HepG2 (cell line): ENCODE measurements at regions of chr12 and their contacts with region 1.

Region 1: GRCh38 chr12:88993651-88994050 is 358.6 kb downstream of the DUSP6 start:
- DNase-seq: peak; percentile 36
- ATAC-seq: no peak
- H3K4me3 ChIP-seq: no peak overlapping the region
- H3K27ac ChIP-seq: no peak overlapping the region
- H3K4me1 ChIP-seq: no peaks in the 10 kb centered on the region
- H3K27me3 ChIP-seq: no peaks in the 10 kb centered on the region; a peak in 1 of 5 replicates
- CTCF ChIP-seq: peak; percentile 55
- EP300 ChIP-seq: no peak
- POLR2A ChIP-seq: no peak
- RAD21 ChIP-seq: no peak

Region 2: DNA sequence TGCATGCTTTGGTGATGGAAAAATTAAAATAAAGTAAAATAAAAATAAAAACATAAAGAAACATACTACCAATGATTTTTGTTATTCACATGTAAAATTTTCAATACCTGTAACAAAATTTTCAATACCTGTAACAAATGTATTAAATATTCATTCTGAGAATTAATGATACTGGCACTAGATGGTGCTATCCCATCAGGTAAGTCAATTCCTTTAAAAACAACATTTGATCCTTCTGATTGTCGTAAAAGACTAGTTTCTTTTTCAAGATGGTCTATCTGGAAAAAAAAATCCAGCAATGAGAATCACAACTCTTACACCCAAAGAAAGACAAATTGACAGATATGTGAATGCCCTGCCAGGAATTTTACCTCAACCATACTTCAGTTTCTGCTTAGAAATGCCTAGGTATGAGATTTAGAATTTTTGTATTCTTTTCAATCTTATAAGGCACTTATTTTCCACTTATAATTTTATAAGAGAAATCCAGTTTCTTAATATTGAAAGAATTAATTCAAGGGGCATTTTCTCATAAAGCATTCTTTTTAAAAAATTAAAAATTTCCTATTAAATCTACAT is 882.5 kb before region 1 on chr12:
- CTCF ChIA-PET with region 1: no interaction called
- POLR2A ChIA-PET with region 1: no interaction called
- in situ Hi-C with region 1: no loop called
- intact Hi-C with region 1: loop called (anchors 5 kb)
- DNase-seq: peak; percentile 24
- ATAC-seq: no peak
- H3K4me3 ChIP-seq: no peak overlapping the region
- H3K27ac ChIP-seq: no peak overlapping the region
- H3K4me1 ChIP-seq: peaks cover 7% of the 10 kb centered on the region
- H3K27me3 ChIP-seq: no peaks in the 10 kb centered on the region
- CTCF ChIP-seq: peak; percentile 46
- EP300 ChIP-seq: no peak
- POLR2A ChIP-seq: no peak
- RAD21 ChIP-seq: no peak

Region 3: GRCh38 chr12:88153959-88154358 is 839.7 kb before region 1 on chr12:
- CTCF ChIA-PET with region 1: no interaction called
- POLR2A ChIA-PET with region 1: no interaction called
- in situ Hi-C with region 1: loop called (anchors 25 kb)
- intact Hi-C with region 1: loop called (anchors 2 kb)
- DNase-seq: peak; percentile 16
- ATAC-seq: no peak
- H3K4me3 ChIP-seq: no peak overlapping the region
- H3K27ac ChIP-seq: no peak overlapping the region
- H3K4me1 ChIP-seq: no peaks in the 10 kb centered on the region
- H3K27me3 ChIP-seq: no peaks in the 10 kb centered on the region
- CTCF ChIP-seq: no peak
- EP300 ChIP-seq: no peak
- POLR2A ChIP-seq: no peak
- RAD21 ChIP-seq: no peak

Region 4: GRCh38 chr12:88633312-88633711 is 360.3 kb before region 1 on chr12:
- CTCF ChIA-PET with region 1: no interaction called
- POLR2A ChIA-PET with region 1: no interaction called
- in situ Hi-C with region 1: loop called (anchors 10 kb)
- intact Hi-C with region 1: loop called (anchors 1 kb)
- DNase-seq: no peak
- ATAC-seq: no peak
- H3K4me3 ChIP-seq: no peak overlapping the region
- H3K27ac ChIP-seq: no peak overlapping the region
- H3K4me1 ChIP-seq: no peaks in the 10 kb centered on the region
- H3K27me3 ChIP-seq: no peaks in the 10 kb centered on the region
- CTCF ChIP-seq: no peak
- EP300 ChIP-seq: no peak
- POLR2A ChIP-seq: no peak
- RAD21 ChIP-seq: no peak

Region 5: GRCh38 chr12:88855301-88855700 is 138.3 kb before region 1 on chr12:
- CTCF ChIA-PET with region 1: no interaction called
- POLR2A ChIA-PET with region 1: no interaction called
- in situ Hi-C with region 1: no loop called
- intact Hi-C with region 1: loop called (anchors 5 kb)
- DNase-seq: no peak
- ATAC-seq: no peak; the same call in 2 of the 3 replicates
- H3K4me3 ChIP-seq: no peak overlapping the region
- H3K27ac ChIP-seq: no peak overlapping the region
- H3K4me1 ChIP-seq: peaks cover 32% of the 10 kb centered on the region
- H3K27me3 ChIP-seq: no peaks in the 10 kb centered on the region
- CTCF ChIP-seq: no peak
- EP300 ChIP-seq: no peak
- POLR2A ChIP-seq: no peak
- RAD21 ChIP-seq: no peak

Region 6: DNA sequence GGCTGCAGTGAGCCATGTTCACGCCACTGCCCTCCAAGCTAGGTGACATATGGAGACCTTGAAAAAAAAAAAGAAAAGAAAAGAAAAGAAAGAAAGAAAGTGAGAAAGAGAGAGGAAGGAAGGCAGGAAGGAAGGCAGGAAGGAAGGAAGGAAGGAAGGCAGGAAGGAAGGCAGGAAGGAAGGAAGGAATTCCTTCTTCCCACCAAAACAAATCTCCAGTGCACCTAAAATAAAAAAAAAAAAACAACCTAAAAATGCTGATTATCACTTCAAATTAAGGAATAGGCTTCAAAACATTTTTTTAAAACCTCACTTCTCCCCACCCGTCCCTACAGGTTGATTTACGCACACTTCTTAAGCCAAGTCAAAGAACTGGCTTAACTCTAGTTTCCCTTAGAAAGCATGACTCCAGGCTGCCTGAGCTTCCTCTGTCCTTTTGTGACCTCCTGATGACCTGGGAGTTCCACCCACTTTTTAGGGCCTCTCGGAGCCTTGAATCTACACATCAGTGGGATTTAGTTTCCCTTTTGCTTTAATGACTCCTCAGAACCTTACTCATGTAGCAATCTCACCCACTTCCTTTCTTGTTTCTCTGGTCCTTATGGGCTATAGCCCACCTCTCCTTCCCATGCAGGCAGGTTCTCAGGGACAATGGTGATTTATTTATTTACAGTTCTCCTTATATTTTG is 340.1 kb after region 1 on chr12:
- CTCF ChIA-PET with region 1: no interaction called
- POLR2A ChIA-PET with region 1: no interaction called
- in situ Hi-C with region 1: no loop called
- intact Hi-C with region 1: no loop called
- DNase-seq: no peak
- ATAC-seq: no peak
- H3K4me3 ChIP-seq: no peak overlapping the region
- H3K27ac ChIP-seq: no peak overlapping the region
- H3K4me1 ChIP-seq: peaks cover 47% of the 10 kb centered on the region
- H3K27me3 ChIP-seq: no peaks in the 10 kb centered on the region
- CTCF ChIP-seq: no peak
- EP300 ChIP-seq: no peak
- POLR2A ChIP-seq: no peak
- RAD21 ChIP-seq: no peak